Activated CD4-positive, alpha-beta memory T cell treated with anti-CD3 and anti-CD28 coated beads for 36 hours (primary cell): ENCODE measurements at regions of chr14 and their contacts with region 1.

Region 1: DNA sequence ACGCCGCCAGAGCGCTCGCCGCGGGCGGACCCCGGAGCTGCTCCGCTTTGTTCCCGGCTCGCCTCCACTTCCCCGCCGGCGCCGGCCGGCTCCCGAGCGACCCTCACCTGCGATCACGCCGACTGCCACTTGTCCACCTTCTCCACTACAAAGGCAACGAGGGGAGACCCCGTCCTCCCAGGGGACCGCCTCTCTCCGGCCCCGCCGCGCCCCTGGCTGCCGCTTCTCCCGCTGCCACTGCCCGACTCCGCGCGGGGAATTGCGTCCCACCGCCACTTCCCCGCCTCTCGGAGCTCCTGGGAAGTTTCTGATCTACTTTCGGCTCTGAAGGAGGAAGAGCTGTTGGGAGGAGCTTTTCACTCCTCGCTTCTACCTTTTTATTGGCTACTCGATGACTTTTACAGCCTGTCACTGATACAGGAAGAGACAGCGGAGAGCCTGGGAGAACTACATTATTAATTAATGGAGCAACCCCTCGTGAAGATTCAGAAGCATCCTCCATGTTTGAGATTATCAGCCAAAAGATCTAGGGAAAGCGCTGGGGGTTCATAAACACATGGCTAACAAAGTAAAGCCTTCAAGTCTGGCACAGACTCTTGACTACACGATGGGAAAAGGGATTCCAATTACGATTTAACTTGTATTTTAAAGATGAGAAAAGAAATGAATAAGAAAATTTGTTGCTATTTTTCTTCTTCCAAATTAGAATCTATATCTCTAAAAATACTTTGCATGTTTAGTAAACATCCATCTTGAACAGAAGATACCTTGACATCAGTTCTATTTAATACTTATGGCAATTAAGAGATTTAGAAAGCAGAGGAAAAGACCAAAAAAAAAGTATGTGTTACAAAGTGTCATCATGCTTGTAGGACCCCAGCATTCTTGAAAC is at the start of gene BAZ1A:
- DNase-seq: peak; percentile 52
- H3K4me3 Mint-ChIP-seq: peak within 1 kb of the TSS; percentile 100
- H3K27ac Mint-ChIP-seq: peak within 1 kb of the TSS; percentile 98
- H3K4me1 Mint-ChIP-seq: peaks cover 33% of the 10 kb centered on the region
- H3K27me3 Mint-ChIP-seq: no peaks in the 10 kb centered on the region
- total RNA-seq, gene BAZ1A: 67.8 to 68.0 TPM

Region 2: DNA sequence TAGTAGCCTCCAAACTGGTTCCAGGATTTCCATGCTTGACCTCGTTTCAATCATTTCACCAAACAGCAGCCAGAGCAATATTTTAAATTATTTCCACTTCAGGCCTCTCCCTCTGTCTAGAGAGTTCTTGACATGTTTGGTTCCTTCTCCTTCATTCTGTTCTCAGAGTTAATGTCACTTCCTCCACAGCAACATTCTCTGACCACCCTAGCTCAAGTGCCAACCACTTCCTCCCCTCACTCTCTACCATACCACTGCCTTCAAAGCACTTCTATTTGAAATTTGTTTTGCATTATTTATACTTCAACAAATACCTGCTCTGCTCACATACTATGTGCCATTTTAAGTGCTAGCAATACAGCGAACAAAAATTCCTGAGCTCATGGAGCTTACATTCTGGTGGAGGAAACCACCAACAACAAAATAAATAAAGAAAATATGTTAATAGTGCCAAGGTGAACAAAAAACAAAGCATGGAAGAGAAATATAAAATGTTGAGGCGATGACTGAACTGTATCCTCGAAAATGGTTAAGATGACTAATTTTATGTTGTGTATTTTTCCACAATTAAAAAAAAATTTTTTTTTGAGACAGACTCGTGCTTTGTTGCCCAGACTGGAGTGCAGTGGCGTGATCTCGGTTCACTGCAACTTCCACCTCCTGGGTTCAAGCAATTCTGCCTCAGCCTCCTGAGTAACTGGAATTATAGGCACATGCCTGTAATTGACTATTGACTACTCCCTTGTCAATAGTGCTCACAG is 17.4 kb before region 1 on chr14:
- CTCF ChIA-PET with region 1: no interaction called
- POLR2A ChIA-PET with region 1: interaction called, 9 read pairs
- intact Hi-C with region 1: loop called (anchors 2 kb)
- DNase-seq: peak; percentile 37
- H3K4me3 Mint-ChIP-seq: no peak overlapping the region
- H3K27ac Mint-ChIP-seq: peak overlapping the region; percentile 75
- H3K4me1 Mint-ChIP-seq: peaks cover 31% of the 10 kb centered on the region
- H3K27me3 Mint-ChIP-seq: no peaks in the 10 kb centered on the region

Region 3: GRCh38 chr14:35046048-35046741 is 170.9 kb after region 1 on chr14 and contains the start of gene FAM177A1:
- CTCF ChIA-PET with region 1: no interaction called
- POLR2A ChIA-PET with region 1: interaction called, 18 read pairs
- intact Hi-C with region 1: loop called (anchors 1 kb)
- DNase-seq: peak; percentile 99
- H3K4me3 Mint-ChIP-seq: peak within 1 kb of the TSS; percentile 97
- H3K27ac Mint-ChIP-seq: peak within 1 kb of the TSS; percentile 98
- H3K4me1 Mint-ChIP-seq: peaks cover 28% of the 10 kb centered on the region
- H3K27me3 Mint-ChIP-seq: no peaks in the 10 kb centered on the region
- total RNA-seq, gene FAM177A1: 48.8 to 56.8 TPM